Dendritic cell treated with granulocyte-macrophage colony-stimulating factor and Interleukin-4, amounts not matched to agents 40 ng/mL and 50 ng/mL, for 4 days (primary cell): ENCODE measurements at regions of chrX and their contacts with region 1.

Region 1: DNA sequence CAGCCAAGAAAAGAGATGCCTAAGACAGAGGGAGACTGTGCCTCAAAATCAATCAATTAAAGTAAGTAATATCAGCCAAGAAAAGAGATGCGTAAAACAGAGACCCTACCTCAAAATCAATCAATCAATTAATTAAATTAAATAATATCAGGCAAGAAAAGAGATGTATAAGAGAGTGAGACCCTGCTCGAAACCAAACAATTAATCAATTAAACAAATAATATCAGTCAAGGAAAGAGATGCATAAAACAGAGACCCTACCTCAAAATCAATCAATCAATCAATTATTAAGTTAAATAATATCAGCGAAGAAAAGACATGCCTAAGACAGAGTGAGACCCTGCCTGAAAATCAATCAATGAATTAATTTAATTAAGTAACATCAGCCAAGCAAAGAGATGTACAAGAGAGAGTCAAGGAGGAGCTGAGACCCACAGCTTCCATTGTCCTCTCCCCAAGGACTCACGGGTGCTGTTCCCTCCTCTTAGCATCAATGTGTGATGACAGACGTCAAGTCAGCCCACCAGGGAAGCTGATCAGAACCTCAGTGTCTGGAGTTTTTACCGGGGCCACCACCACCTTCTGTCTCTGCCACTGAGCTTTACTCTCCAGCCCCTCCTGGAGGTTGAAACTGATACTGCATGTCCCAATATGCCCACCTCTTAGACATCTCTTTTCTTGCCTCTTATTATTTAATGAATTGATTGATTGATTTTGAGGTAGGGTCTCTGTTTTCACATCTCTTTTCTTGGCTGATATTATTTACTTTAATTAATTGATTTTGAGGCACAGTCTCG is 10.5 kb upstream of the AKAP17A start:
- H3K4me3 Mint-ChIP-seq: no peak overlapping the region
- H3K27ac Mint-ChIP-seq: no peak overlapping the region
- H3K4me1 Mint-ChIP-seq: peaks cover 13% of the 10 kb centered on the region
- H3K27me3 Mint-ChIP-seq: no peaks in the 10 kb centered on the region

Region 2: GRCh38 chrX:1361275-1361674 is 219.7 kb before region 1 on chrX:
- intact Hi-C with region 1: no loop called
- H3K4me3 Mint-ChIP-seq: no peak overlapping the region
- H3K27ac Mint-ChIP-seq: no peak overlapping the region
- H3K4me1 Mint-ChIP-seq: peaks cover 13% of the 10 kb centered on the region
- H3K27me3 Mint-ChIP-seq: no peaks in the 10 kb centered on the region

Region 3: DNA sequence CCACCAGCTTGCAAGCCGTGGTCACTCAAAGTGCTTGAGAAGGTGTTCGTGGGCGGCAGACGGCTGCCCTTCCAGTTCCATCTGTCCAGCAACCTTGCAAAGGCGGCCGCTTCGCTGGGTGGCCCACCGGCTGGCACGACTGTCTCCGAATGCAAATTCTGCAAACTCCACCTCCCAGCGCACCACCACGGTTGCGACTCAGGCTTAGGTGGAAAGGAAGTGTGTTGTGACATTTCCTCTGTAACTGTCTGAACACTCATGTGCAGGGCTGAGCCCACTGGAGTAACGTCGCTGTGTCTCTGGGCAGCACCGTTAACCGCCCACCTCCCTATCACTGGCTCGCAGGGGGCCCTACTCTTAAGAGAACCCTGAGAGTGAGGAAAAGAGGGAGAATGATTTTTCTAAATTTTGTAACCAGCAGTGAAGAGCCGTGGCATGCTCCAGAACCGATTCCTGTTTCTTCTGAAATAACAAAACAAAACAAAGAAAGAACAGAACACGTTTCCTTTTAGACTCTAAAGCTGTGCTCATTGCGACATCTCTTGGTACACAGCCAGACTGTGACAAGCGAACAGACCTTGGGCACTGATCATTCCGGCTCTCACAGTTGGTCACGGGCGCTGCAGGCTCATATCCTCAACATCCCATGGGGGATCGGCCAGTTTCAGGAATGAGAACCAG is 43.8 kb before region 1 on chrX and contains the start of gene P2RY8:
- intact Hi-C with region 1: loop called (anchors 5 kb)
- H3K4me3 Mint-ChIP-seq: peak within 1 kb of the TSS; percentile 76
- H3K27ac Mint-ChIP-seq: peak within 1 kb of the TSS; percentile 88
- H3K4me1 Mint-ChIP-seq: peaks cover 37% of the 10 kb centered on the region
- H3K27me3 Mint-ChIP-seq: no peaks in the 10 kb centered on the region